ENCODE measurements at regions of chr15 and their contacts with region 1.

Region 1: GRCh38 chr15:68053701-68054627 is at the start of gene PIAS1:
- DNase-seq: peak; percentile 96
- H3K4me3 ChIP-seq: peak within 1 kb of the TSS; percentile 93 to 100 (median 98)
- H3K27ac ChIP-seq: peak within 1 kb of the TSS; percentile 94 to 98 (median 95)
- H3K4me1 ChIP-seq: peaks cover 29 to 42% (median 36%) of the 10 kb centered on the region in 4 donors
- H3K27me3 ChIP-seq: no peaks in the 10 kb centered on the region
- CTCF ChIP-seq: no peak
- EP300 ChIP-seq: no peak
- POLR2A ChIP-seq: peak; percentile 85
- total RNA-seq, gene PIAS1: 26.2 to 68.4 (median 53.1) TPM

Region 2: DNA sequence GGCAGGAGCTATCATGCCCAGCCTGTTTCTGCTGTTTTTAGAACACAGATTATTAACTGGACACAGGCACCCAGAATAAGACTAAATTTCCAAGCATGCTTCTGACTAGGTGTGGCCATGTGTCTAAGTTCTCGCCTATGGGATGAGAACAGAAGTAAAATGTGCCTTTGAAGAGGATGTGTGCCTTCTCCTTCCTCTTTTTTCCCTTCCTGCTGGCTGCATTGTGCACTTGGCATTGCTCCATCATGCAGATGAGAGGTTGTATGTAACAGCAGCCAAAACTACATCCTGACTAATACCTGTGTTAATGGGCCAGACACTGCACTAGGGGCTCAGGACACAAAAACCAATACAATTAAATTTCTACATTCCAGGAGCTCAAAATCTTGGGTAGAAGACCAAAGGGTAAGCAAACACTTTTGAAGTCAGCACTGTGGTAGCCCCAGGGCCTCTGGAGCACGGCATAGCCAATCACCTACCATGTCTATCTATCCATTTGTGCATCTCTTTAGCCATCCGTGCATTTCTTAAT is 173.2 kb before region 1 on chr15:
- intact Hi-C with region 1: no loop called
- DNase-seq: peak; percentile 87
- H3K4me3 ChIP-seq: no peak overlapping the region
- H3K27ac ChIP-seq: no peak overlapping the region
- H3K4me1 ChIP-seq: peaks cover 14 to 44% (median 35%) of the 10 kb centered on the region in 4 donors
- H3K27me3 ChIP-seq: no peaks in the 10 kb centered on the region
- CTCF ChIP-seq: no peak
- EP300 ChIP-seq: no peak
- POLR2A ChIP-seq: no peak

Region 3: DNA sequence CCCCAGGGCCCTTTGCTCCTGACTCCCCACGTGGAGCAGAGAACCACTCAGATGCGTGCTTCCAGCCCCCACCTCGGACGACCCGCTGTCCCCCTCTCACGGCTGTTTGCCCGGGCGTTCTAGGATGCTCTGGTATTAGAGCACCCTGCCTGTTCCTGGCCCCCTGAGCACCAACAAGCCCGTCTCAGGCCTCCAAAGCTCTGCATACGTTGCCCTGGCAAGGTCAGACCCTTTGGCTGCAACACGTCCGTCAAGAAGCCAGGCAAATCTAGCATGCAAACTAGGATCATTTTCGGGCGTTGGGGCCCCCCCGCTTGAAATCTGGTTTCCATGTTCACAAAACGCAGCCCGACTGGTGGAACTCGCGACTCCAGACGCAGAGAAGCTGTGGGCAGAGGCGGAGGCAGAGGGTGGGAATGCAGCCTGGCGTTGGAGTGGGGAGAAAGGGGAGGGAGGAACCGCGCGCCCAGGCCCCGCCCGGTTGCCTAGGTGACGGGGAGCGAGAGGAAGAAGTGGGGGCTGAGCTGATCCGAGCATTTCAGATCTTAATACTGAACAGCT is 86.0 kb before region 1 on chr15:
- intact Hi-C with region 1: no loop called
- DNase-seq: no peak
- H3K4me3 ChIP-seq: peak overlapping the region; percentile 47 to 52 (median 49)
- H3K27ac ChIP-seq: peak overlapping the region; percentile 38 to 75 (median 48)
- H3K4me1 ChIP-seq: peaks cover 4 to 20% (median 19%) of the 10 kb centered on the region in 4 donors
- H3K27me3 ChIP-seq: no peaks in the 10 kb centered on the region
- CTCF ChIP-seq: peak in 1 of 3 experiments; percentile 5
- EP300 ChIP-seq: no peak
- POLR2A ChIP-seq: no peak

Region 4: DNA sequence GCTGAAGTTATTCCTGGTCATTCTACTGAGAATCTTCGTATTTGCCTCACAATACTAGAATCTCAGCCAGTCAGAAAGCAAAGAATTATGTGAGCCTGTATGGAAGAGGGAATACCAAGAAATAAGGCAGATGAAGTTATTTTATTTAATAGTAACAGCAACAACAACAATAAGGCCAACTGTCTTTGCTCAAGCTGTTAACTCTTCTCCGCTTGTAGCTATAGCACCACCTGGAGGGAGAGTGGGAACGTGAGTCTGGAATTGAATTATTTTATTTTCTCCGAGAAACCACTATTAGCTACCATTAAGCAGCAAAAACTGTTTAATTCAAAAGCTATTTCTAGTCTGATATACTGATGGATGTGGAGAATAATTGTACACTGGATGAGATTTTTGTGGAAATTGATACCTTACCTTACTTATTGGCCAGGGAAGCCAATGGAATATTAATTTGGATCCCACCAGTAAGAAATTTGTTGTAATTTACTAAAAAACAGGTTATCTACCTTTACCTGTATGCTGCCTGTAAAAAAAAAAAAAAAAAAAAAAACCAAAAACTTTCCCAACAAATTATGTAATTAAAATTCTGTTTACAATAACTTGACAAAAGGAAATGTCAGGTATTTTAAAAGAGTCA is 101.1 kb after region 1 on chr15:
- intact Hi-C with region 1: loop called (anchors 2 kb)
- DNase-seq: no peak
- H3K4me3 ChIP-seq: no peak overlapping the region
- H3K27ac ChIP-seq: peak overlapping the region in 1 of 4 donors; percentile 67
- H3K4me1 ChIP-seq: peaks cover 17 to 72% (median 61%) of the 10 kb centered on the region in 4 donors
- H3K27me3 ChIP-seq: no peaks in the 10 kb centered on the region
- CTCF ChIP-seq: peak; percentile 78 to 83 (median 80)
- EP300 ChIP-seq: no peak
- POLR2A ChIP-seq: no peak

Region 5: GRCh38 chr15:68210821-68211655 is 157.1 kb after region 1 on chr15:
- intact Hi-C with region 1: loop called (anchors 5 kb)
- DNase-seq: no peak
- H3K4me3 ChIP-seq: peak overlapping the region; percentile 24 to 54 (median 38)
- H3K27ac ChIP-seq: peak overlapping the region in 2 of 4 donors; percentile 18 to 71
- H3K4me1 ChIP-seq: peaks cover 14 to 33% (median 25%) of the 10 kb centered on the region in 4 donors
- H3K27me3 ChIP-seq: no peaks in the 10 kb centered on the region
- CTCF ChIP-seq: peak; percentile 93 to 98 (median 95)
- EP300 ChIP-seq: no peak
- POLR2A ChIP-seq: no peak